Common myeloid progenitor, CD34-positive (primary cell): ENCODE measurements at regions of chr15 and their contacts with region 1.

Region 1: GRCh38 chr15:74635228-74635627 is 19.6 kb downstream of the CLK3 start:
- DNase-seq: peak; percentile 70 to 81 (median 76)
- H3K4me3 ChIP-seq: no peak overlapping the region
- H3K27ac ChIP-seq: no peak overlapping the region
- H3K4me1 ChIP-seq: no peaks in the 10 kb centered on the region
- H3K27me3 ChIP-seq: no peaks in the 10 kb centered on the region

Region 2: GRCh38 chr15:73550190-73550589 is 1085.0 kb before region 1 on chr15:
- CTCF ChIA-PET with region 1: no interaction called
- POLR2A ChIA-PET with region 1: no interaction called
- DNase-seq: no peak
- H3K4me3 ChIP-seq: no peak overlapping the region
- H3K27ac ChIP-seq: no peak overlapping the region
- H3K4me1 ChIP-seq: peaks cover 2 to 9% (median 6%) of the 10 kb centered on the region in 4 experiments
- H3K27me3 ChIP-seq: no peaks in the 10 kb centered on the region

Region 3: GRCh38 chr15:74438721-74439316 is 196.4 kb before region 1 on chr15:
- CTCF ChIA-PET with region 1: interaction called, 10 read pairs
- POLR2A ChIA-PET with region 1: no interaction called
- DNase-seq: peak; percentile 80 to 89 (median 84)
- H3K4me3 ChIP-seq: no peak overlapping the region
- H3K27ac ChIP-seq: no peak overlapping the region
- H3K4me1 ChIP-seq: peaks cover 0 to 38% (median 24%) of the 10 kb centered on the region in 4 experiments
- H3K27me3 ChIP-seq: no peaks in the 10 kb centered on the region

Region 4: GRCh38 chr15:74653426-74654123 is 18.3 kb after region 1 on chr15:
- CTCF ChIA-PET with region 1: interaction called, 96 read pairs
- POLR2A ChIA-PET with region 1: no interaction called
- DNase-seq: peak; percentile 8 to 68 (median 46)
- H3K4me3 ChIP-seq: no peak overlapping the region
- H3K27ac ChIP-seq: no peak overlapping the region
- H3K4me1 ChIP-seq: peaks cover 0 to 9% (median 0%) of the 10 kb centered on the region in 4 experiments
- H3K27me3 ChIP-seq: no peaks in the 10 kb centered on the region

Region 5: GRCh38 chr15:74787251-74788041 is 152.2 kb after region 1 on chr15:
- CTCF ChIA-PET with region 1: interaction called, 735 read pairs
- POLR2A ChIA-PET with region 1: no interaction called
- DNase-seq: peak; percentile 97 to 99 (median 99)
- H3K4me3 ChIP-seq: peak overlapping the region in 5 of 7 experiments; percentile 50 to 71 (median 58)
- H3K27ac ChIP-seq: peak overlapping the region; percentile 54 to 89
- H3K4me1 ChIP-seq: peaks cover 45 to 100% (median 98%) of the 10 kb centered on the region in 4 experiments
- H3K27me3 ChIP-seq: no peaks in the 10 kb centered on the region